K562 (cell line): ENCODE measurements at regions of chr2 and their contacts with region 1.

Region 1: GRCh38 chr2:217713395-217714286 is 289.2 kb downstream of the TNS1 start:
- DNase-seq: peak; percentile 57 to 64 (median 64)
- ATAC-seq: peak; percentile 91
- H3K4me3 ChIP-seq: no peak overlapping the region
- H3K27ac ChIP-seq: no peak overlapping the region
- H3K4me1 ChIP-seq: 0 out of 5 replicates have a peak, but pooled peaks cover 0 to 3% of the 10 kb centered on the region in 2 experiments
- H3K27me3 ChIP-seq: peaks cover 0 to 14% of the 10 kb centered on the region in 2 experiments; a peak in 2 of 5 replicates
- CTCF ChIP-seq: peak; percentile 72 to 85 (median 84)
- EP300 ChIP-seq: no peak
- POLR2A ChIP-seq: no peak
- RAD21 ChIP-seq: peak; percentile 78 to 82

Region 2: DNA sequence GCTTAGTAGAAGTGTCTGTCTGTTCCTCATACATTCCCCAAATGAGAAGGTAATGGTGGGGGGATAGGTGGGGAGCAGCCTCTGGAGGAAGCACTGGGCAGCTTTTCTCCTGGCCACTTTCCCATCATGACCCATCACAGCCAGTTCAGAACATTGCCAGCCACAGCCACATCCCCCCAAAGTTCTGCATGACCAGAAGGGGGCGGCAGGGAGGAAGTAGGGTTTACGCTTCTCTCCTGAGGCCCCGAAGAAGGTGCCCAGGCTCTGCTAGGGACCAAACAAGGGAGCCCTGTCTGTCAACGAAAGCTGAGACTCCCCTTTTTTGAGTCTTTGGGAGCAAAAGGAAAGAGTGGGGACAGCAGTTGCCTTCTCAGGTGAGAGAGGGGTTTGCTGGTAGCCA is 1026.0 kb before region 1 on chr2:
- CTCF ChIA-PET with region 1: no interaction called
- POLR2A ChIA-PET with region 1: no interaction called
- in situ Hi-C with region 1: loop called (anchors 25 kb)
- intact Hi-C with region 1: loop called (anchors 5 kb)
- DNase-seq: peak; percentile 41 to 56 (median 52)
- ATAC-seq: peak; percentile 81
- H3K4me3 ChIP-seq: no peak overlapping the region
- H3K27ac ChIP-seq: no peak overlapping the region
- H3K4me1 ChIP-seq: peaks cover 8 to 12% of the 10 kb centered on the region in 2 experiments; a peak in 4 of 5 replicates
- H3K27me3 ChIP-seq: no peaks in the 10 kb centered on the region; a peak in 1 of 5 replicates
- CTCF ChIP-seq: peak; percentile 46 to 65 (median 64)
- EP300 ChIP-seq: no peak
- POLR2A ChIP-seq: no peak
- RAD21 ChIP-seq: peak in 1 of 2 experiments; percentile 42; a peak in 2 of 4 replicates

Region 3: DNA sequence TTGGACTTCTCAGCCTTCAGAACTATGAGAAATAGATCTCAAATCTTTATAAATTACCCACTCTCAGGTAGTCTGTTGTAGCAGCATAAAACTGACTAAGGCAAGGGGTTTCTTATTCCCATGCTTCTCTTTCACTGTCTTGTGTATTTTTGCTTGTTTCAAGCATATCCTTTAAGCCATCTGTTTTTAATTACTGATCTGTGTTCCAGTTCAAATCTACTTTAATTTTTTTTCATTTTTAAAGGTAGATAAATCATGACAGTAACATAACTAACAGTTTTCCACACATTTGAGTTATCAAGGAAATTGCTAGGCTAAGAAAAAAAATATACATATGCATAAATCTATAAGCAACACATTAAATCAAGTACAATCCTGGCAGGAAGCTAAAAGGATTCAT is 535.9 kb before region 1 on chr2:
- CTCF ChIA-PET with region 1: no interaction called
- POLR2A ChIA-PET with region 1: no interaction called
- in situ Hi-C with region 1: no loop called
- intact Hi-C with region 1: loop called (anchors 10 kb)
- DNase-seq: no peak
- ATAC-seq: no peak
- H3K4me3 ChIP-seq: no peak overlapping the region
- H3K27ac ChIP-seq: no peak overlapping the region
- H3K4me1 ChIP-seq: no peaks in the 10 kb centered on the region
- H3K27me3 ChIP-seq: no peaks in the 10 kb centered on the region
- CTCF ChIP-seq: no peak
- EP300 ChIP-seq: no peak
- POLR2A ChIP-seq: no peak
- RAD21 ChIP-seq: no peak

Region 4: GRCh38 chr2:217650716-217651360 is 62.8 kb before region 1 on chr2:
- CTCF ChIA-PET with region 1: no interaction called
- POLR2A ChIA-PET with region 1: no interaction called
- in situ Hi-C with region 1: no loop called
- intact Hi-C with region 1: loop called (anchors 5 kb)
- DNase-seq: peak; percentile 28 to 52 (median 38)
- ATAC-seq: peak; percentile 85
- H3K4me3 ChIP-seq: no peak overlapping the region
- H3K27ac ChIP-seq: no peak overlapping the region
- H3K4me1 ChIP-seq: no peaks in the 10 kb centered on the region
- H3K27me3 ChIP-seq: peaks cover 0 to 4% of the 10 kb centered on the region in 2 experiments; a peak in 3 of 5 replicates
- CTCF ChIP-seq: peak; percentile 52 to 63 (median 60); a peak in 5 of 6 replicates
- EP300 ChIP-seq: no peak
- POLR2A ChIP-seq: no peak
- RAD21 ChIP-seq: peak; percentile 27 to 38; a peak in 3 of 4 replicates